Astrocyte of the cerebellum (primary cell): ENCODE measurements at regions of chr13 and their contacts with region 1.

Region 1: DNA sequence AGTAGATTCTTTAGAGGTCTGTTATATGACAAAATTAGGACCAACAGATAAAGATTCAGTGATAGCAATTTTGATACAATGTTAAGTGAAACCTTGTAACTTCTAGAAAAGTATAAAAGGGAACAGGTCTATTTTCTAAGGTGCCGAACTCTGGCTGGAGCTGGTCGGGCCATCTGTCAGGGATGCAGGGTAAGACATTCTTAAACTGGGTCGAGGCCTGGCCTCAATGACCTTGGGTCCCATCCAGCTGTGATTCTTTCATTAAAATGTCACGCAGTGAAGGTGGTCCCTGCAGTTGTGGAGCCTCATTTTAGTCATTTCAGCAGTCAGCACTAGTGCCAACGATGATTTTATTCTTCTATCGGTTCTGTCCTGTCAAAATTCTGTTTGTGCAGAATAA is 271.9 kb upstream of the SPRY2 start:
- DNase-seq: no peak
- H3K4me3 ChIP-seq: no peak overlapping the region
- CTCF ChIP-seq: no peak

Region 2: GRCh38 chr13:80654638-80655249 is 41.9 kb after region 1 on chr13:
- in situ Hi-C with region 1: loop called (anchors 5 kb)
- DNase-seq: no peak
- H3K4me3 ChIP-seq: peak overlapping the region; percentile 22
- CTCF ChIP-seq: no peak